ENCODE measurements at regions of chr1 and their contacts with region 1.

Region 1: DNA sequence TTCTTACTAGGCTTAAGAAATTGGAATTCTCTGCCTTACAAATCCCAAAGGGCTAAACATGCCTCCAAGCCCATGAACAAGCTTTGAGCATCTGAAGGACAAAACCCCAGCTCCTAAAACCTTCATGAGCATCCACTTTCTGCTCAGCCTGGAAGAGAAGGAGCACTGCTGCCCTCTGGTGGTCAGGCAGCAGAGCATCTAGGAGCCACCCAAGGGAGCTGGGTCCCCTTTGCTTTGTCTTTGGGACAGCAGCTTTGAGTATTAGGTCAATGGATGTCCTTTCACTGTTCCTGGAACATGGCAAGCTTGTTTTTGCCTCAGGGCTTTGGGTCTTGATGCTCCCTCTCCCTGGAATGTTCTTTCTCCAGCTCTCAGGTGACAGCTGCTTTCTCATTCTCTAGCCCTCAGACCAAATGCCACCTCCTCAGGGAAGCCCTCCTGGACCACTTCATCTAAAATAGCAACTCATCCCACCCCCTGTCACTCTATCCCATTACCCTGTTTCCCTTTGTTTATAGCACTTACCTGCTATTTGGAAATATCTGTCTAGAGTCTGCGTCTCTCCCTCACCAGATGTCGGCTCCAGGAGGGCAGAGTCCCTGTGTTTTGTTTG is 25.7 kb downstream of the RAB7B start:
- DNase-seq: peak; percentile 74
- ATAC-seq: peak; percentile 88
- H3K4me3 Mint-ChIP-seq: no peak overlapping the region
- H3K27ac Mint-ChIP-seq: no peak overlapping the region
- H3K4me1 Mint-ChIP-seq: no peaks in the 10 kb centered on the region
- H3K27me3 Mint-ChIP-seq: peaks cover 1% of the 10 kb centered on the region
- CTCF ChIP-seq: peak; percentile 87

Region 2: DNA sequence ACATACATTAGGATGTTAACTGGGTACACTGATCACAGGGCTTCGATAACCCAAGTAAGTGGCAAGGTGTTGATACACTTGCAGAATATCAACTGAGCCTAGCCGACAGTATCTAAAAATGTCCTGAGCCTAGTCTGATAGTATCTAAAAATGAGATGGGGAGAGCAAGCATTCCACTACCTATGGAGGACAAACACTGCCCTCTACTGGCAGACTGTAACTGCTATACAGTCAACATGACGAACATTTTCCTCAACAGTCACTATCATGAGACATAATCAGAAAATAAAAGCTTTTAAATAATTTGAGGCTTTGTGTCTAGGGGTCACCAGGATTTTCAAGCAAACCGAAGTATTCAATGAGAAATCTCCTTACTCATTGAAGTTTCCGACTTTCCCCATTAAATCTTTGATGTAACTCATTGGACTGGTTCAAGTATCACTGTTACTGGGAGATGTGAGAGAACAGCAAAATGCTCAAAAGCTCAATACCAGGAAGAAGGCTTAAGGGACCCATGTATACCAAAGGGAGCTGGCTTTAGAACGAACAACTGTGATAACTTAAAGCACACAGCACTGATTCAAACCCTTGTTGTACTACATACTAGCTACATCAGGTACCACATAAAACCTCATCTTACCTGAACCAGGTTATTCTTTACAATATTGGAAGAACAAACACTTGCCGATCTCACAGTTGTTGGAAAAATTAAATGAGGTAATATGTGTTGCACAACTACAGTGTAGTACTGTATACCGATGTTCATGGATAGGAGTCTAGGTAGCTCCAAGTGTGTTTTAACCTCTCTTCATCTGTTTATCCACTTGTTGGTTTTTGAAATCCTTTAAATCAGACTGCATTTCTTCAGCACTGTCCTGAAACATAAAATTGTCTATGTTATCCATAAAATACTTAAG is 266.1 kb before region 1 on chr1:
- CTCF ChIA-PET with region 1: interaction called, 24 read pairs
- POLR2A ChIA-PET with region 1: no interaction called
- intact Hi-C with region 1: no loop called
- DNase-seq: peak; percentile 83
- ATAC-seq: peak; percentile 87
- H3K4me3 Mint-ChIP-seq: no peak overlapping the region
- H3K27ac Mint-ChIP-seq: peak overlapping the region; percentile 32
- H3K4me1 Mint-ChIP-seq: peaks cover 12% of the 10 kb centered on the region
- H3K27me3 Mint-ChIP-seq: no peaks in the 10 kb centered on the region
- CTCF ChIP-seq: peak; percentile 91

Region 3: DNA sequence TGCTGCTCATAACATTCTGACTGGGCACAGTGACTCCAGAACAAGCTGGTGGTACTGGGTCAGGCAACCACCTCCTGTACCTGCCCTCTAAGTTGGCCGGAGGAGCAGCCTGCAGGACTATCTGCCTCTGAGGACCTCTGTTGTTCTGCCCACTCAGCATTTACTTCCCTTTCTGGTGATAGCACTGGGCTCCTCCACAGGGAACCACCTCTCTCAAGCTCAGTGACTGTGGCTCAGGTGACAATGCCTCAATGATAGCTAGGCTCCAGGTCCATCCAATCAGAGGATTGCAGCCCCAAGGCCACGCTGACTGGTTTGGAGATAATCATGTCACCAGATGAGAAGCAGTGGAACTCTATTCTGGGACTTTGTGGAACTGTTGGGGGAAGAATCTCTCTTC is 180.3 kb before region 1 on chr1:
- CTCF ChIA-PET with region 1: interaction called, 145 read pairs
- POLR2A ChIA-PET with region 1: interaction called, 6 read pairs
- intact Hi-C with region 1: no loop called
- DNase-seq: no peak
- ATAC-seq: no peak
- H3K4me3 Mint-ChIP-seq: no peak overlapping the region
- H3K27ac Mint-ChIP-seq: peak overlapping the region; percentile 22
- H3K4me1 Mint-ChIP-seq: no peaks in the 10 kb centered on the region
- H3K27me3 Mint-ChIP-seq: no peaks in the 10 kb centered on the region
- CTCF ChIP-seq: no peak

Region 4: DNA sequence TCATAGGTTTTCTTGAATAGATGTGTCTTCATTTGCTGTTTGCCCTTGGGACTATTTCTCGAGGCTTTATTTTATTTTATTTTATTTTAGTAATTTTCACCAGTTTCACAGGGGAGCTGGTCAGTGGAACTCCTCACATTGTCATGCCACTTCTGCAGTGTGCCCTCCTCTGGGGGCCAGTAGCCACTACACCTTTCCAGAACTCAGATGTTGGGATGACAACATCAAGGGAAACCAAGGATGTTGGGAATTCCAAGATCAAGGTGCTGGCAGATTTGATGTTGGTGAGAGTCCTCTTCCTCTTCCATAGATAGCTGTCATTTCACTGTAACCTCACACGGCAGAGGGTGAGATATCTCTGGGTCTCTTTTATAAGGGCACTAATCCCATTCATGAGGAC is 69.7 kb before region 1 on chr1:
- CTCF ChIA-PET with region 1: interaction called, 11 read pairs
- POLR2A ChIA-PET with region 1: no interaction called
- intact Hi-C with region 1: no loop called
- DNase-seq: no peak
- ATAC-seq: no peak
- H3K4me3 Mint-ChIP-seq: no peak overlapping the region
- H3K27ac Mint-ChIP-seq: no peak overlapping the region
- H3K4me1 Mint-ChIP-seq: no peaks in the 10 kb centered on the region
- H3K27me3 Mint-ChIP-seq: no peaks in the 10 kb centered on the region
- CTCF ChIP-seq: no peak

Region 5: GRCh38 chr1:205961405-205961804 is 16.1 kb before region 1 on chr1:
- CTCF ChIA-PET with region 1: interaction called, 50 read pairs
- POLR2A ChIA-PET with region 1: no interaction called
- intact Hi-C with region 1: no loop called
- DNase-seq: peak; percentile 58
- ATAC-seq: peak; percentile 93
- H3K4me3 Mint-ChIP-seq: no peak overlapping the region
- H3K27ac Mint-ChIP-seq: peak overlapping the region; percentile 32
- H3K4me1 Mint-ChIP-seq: peaks cover 4% of the 10 kb centered on the region
- H3K27me3 Mint-ChIP-seq: no peaks in the 10 kb centered on the region
- CTCF ChIP-seq: no peak

Region 6: DNA sequence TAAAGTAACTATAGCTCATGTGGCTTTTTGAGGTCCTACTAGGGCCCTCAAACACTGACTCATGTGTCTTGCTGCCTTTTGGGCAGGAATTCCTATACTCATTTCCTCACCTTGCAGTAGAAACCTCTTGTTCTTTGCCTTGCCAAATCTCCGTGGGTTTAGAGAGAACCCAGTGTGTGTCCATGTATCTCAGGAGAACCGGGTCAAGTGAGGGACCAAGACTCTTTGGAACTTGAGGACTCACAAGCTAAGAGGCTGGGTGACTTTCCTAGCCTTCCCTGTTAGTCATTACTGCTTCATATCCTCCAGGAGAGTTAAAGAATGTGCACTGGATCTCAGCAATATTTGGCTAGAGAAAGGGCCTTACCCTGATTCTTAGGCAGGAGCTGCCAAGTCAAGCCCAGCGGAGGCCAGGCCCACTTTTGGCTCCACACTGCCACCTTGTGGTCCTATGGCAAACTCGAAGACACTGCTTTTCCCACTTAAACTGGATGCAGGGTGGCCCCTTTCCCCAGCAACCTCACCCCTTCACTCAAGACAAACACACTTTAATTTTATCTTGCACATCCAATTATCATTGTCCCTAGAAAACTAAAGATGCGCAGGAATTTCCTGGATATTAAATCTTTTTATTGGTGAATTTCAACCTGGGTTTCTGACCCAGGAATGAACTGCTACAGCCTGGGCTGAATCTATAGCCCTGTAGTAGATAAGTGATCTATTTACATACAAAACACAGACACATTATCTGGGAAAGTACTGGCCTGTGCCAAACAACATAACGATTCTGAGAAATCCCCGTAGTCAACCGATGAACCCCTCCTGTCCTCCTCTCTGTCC is 129.0 kb after region 1 on chr1:
- CTCF ChIA-PET with region 1: interaction called, 86 read pairs
- POLR2A ChIA-PET with region 1: no interaction called
- intact Hi-C with region 1: loop called (anchors 5 kb)
- DNase-seq: peak; percentile 88
- ATAC-seq: peak; percentile 95
- H3K4me3 Mint-ChIP-seq: no peak overlapping the region
- H3K27ac Mint-ChIP-seq: no peak overlapping the region
- H3K4me1 Mint-ChIP-seq: no peaks in the 10 kb centered on the region
- H3K27me3 Mint-ChIP-seq: no peaks in the 10 kb centered on the region
- CTCF ChIP-seq: peak; percentile 85